ENCODE measurements at regions of chr17 and their contacts with region 1.

Region 1: GRCh38 chr17:49756323-49757150 is 7.4 kb downstream of the FAM117A start:
- DNase-seq: no peak
- ATAC-seq: no peak
- H3K4me3 ChIP-seq: no peak overlapping the region
- H3K27ac ChIP-seq: no peak overlapping the region
- H3K4me1 ChIP-seq: no peaks in the 10 kb centered on the region; the same call in 1 of the 2 replicates
- H3K27me3 ChIP-seq: peaks cover 2% of the 10 kb centered on the region; the same call in 1 of the 2 replicates
- CTCF ChIP-seq: no peak

Region 2: GRCh38 chr17:49252148-49253034 is 504.1 kb before region 1 on chr17:
- CTCF ChIA-PET with region 1: no interaction called
- POLR2A ChIA-PET with region 1: interaction called, 21 read pairs
- in situ Hi-C with region 1: no loop called
- intact Hi-C with region 1: no loop called
- DNase-seq: no peak
- ATAC-seq: 0 out of 2 replicates have a peak, but pooled peaks have one; percentile 13
- H3K4me3 ChIP-seq: no peak overlapping the region
- H3K27ac ChIP-seq: no peak overlapping the region
- H3K4me1 ChIP-seq: no peaks in the 10 kb centered on the region
- H3K27me3 ChIP-seq: no peaks in the 10 kb centered on the region
- CTCF ChIP-seq: no peak

Region 3: GRCh38 chr17:49482144-49482817 is 274.3 kb before region 1 on chr17:
- CTCF ChIA-PET with region 1: no interaction called
- POLR2A ChIA-PET with region 1: interaction called, 14 read pairs
- in situ Hi-C with region 1: no loop called
- intact Hi-C with region 1: no loop called
- DNase-seq: no peak
- ATAC-seq: no peak
- H3K4me3 ChIP-seq: no peak overlapping the region
- H3K27ac ChIP-seq: no peak overlapping the region
- H3K4me1 ChIP-seq: no peaks in the 10 kb centered on the region
- H3K27me3 ChIP-seq: peaks cover 9% of the 10 kb centered on the region; the same call in 1 of the 2 replicates
- CTCF ChIP-seq: no peak